OCI-LY7 (cell line): ENCODE measurements at regions of chr3 and their contacts with region 1.

Region 1: GRCh38 chr3:132486086-132486485 is 68.8 kb downstream of the DNAJC13 start:
- DNase-seq: no peak
- H3K4me3 ChIP-seq: no peak overlapping the region
- H3K27ac ChIP-seq: no peak overlapping the region
- H3K4me1 ChIP-seq: no peaks in the 10 kb centered on the region
- CTCF ChIP-seq: no peak

Region 2: DNA sequence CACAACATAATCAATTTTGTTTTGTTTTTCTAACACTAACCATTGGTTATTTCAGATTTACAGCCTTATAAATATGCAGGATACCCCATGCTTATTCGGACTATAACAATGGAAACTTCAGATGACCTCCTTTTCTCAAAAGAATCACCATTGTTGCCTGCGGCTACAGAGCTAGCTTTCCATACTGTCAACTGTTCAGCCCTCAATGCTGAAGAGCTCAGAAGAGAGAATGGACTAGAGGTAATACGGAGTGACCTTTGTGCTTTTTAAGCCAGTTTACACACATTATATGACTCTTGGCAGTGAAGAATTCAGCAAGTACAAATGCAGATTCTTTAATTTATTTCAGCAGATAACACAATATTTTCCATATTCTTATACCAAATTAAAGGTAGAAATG is 13.0 kb after region 1 on chr3:
- CTCF ChIA-PET with region 1: no interaction called
- POLR2A ChIA-PET with region 1: interaction called, 10 read pairs
- intact Hi-C with region 1: no loop called
- DNase-seq: no peak
- H3K4me3 ChIP-seq: no peak overlapping the region
- H3K27ac ChIP-seq: no peak overlapping the region
- H3K4me1 ChIP-seq: no peaks in the 10 kb centered on the region
- CTCF ChIP-seq: no peak